ENCODE measurements at regions of chr3 and their contacts with region 1.

Region 1: DNA sequence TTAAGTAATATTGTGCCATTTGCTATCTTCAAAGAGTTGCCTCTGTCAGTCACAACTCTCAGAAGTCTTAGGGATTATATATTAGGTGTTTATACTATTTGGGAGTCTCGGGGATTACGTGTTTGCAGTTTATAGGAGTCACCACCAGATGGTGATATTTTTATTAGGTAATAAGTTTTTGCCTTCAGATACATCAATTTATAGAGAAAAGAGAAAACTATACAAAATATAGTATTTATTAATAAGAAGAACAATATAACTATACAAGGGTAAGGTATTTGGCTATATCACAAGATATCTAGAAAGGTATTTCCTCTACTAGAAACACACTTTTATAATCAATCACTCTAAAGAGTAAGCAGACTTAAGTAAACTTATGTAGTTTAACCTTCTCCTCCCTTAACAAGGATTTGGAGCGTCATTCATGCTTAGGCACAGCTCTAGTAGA is 10.7 kb upstream of the DHX36 start:
- DNase-seq: no peak
- H3K4me3 ChIP-seq: no peak overlapping the region
- H3K27ac ChIP-seq: no peak overlapping the region
- H3K4me1 ChIP-seq: no peaks in the 10 kb centered on the region
- H3K27me3 ChIP-seq: no peaks in the 10 kb centered on the region
- CTCF ChIP-seq: peak in 1 of 3 experiments; percentile 30
- POLR2A ChIP-seq: no peak

Region 2: GRCh38 chr3:154356009-154356408 is 21.0 kb after region 1 on chr3:
- intact Hi-C with region 1: no loop called
- DNase-seq: no peak
- H3K4me3 ChIP-seq: no peak overlapping the region
- H3K27ac ChIP-seq: no peak overlapping the region
- H3K4me1 ChIP-seq: no peaks in the 10 kb centered on the region
- H3K27me3 ChIP-seq: no peaks in the 10 kb centered on the region
- CTCF ChIP-seq: no peak
- POLR2A ChIP-seq: no peak

Region 3: GRCh38 chr3:155323063-155323666 is 988.2 kb after region 1 on chr3:
- intact Hi-C with region 1: loop called (anchors 10 kb)
- DNase-seq: no peak
- H3K4me3 ChIP-seq: no peak overlapping the region
- H3K27ac ChIP-seq: no peak overlapping the region
- H3K4me1 ChIP-seq: no peaks in the 10 kb centered on the region
- H3K27me3 ChIP-seq: no peaks in the 10 kb centered on the region
- CTCF ChIP-seq: peak; percentile 33 to 61 (median 43)
- POLR2A ChIP-seq: no peak

Measured in vagina (tissue), 2 donors.